ENCODE measurements at regions of chr10 and their contacts with region 1.

Region 1: GRCh38 chr10:59606551-59606961 is 103.1 kb downstream of the SLC16A9 start:
- DNase-seq: no peak
- CTCF ChIP-seq: no peak

Region 2: GRCh38 chr10:58781873-58782488 is 824.6 kb before region 1 on chr10:
- in situ Hi-C with region 1: loop called (anchors 25 kb)
- DNase-seq: peak; percentile 39
- CTCF ChIP-seq: peak; percentile 36

Region 3: DNA sequence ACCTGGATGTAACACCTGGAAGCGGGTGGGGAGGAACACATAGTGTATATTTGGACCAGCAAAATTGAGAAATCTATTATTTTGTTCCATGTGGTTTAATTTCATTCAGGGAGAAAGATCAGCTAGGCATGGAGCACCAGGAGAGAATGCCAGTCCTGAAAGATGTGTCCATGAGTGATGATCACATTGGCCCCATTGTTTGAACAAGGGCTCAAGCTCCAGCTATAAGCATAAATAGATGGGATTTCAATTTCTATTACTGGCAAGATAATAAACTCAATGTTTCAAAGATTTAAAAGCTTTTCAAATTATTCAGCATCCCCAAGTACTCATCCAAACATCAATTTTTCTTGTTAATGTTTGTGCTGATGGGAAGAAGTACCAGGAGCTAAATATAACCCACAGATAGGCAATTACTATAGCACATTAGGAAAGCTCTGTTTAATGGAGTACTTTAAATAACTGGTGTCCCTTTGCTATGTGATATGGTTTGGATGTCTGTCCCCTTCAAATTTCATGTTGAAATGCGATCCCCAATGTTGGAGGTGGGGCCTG is 705.4 kb before region 1 on chr10:
- in situ Hi-C with region 1: no loop called
- DNase-seq: no peak
- CTCF ChIP-seq: no peak

Region 4: DNA sequence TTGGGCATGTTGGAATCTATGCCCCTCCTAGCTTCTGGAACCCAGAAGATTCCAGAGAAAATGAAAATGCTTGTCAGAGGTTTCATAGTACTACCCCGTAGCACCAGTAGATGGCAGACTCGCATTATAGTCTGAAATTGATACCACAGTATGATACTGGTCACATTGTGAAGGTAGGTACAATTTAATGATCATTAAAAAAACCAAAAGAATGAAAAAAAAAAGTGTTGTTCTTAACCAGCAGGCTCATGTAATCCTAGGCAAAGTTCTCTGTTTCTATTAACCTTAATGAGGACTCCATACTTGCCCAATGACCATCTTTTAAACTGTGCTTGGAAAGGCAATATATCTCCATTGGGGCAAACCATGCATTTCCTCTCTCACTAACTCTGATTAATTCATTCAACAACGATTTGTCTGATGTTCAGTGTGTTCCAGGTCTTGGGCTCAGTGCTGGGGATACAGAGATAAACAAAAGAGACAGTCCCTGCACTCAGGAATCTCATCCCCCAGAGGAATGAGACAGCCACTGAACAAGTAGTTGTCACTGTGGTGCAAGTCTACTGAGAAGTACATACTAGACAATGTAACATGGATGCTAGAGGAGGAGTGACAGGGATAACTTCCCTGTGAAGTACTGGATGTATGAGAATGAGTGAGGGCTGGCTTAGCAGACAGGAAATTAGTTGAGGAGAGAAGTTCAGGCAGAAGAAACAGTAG is 653.6 kb before region 1 on chr10:
- in situ Hi-C with region 1: loop called (anchors 25 kb)
- DNase-seq: peak; percentile 23
- CTCF ChIP-seq: peak; percentile 55

Region 5: DNA sequence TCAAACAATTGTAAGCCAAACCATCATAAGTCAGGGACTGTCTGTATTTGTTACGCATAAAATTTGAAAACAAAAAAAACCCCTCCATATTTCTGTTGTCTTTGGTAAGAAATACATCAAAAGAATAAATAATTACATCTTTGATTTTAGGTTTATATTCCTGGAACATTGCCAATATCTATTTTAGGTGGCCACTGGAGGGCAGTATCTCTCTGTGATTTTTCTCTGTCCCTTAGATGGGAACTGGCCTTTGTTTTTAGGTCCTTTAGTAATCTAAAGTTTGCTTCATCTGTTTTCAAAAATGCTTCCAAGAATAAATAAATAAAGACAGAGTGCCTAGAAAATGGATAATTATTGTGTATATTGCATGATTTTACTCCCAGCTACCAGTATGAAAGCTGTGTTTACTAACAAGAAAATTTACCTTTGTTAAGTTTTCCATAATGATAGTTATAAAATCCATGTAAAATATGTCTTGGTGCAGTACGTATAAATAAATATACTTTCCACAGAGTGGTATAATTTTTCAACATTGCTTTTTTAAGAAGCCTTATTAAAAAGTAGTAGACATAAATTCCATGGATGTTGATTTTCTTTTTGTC is 365.9 kb before region 1 on chr10:
- in situ Hi-C with region 1: loop called (anchors 25 kb)
- DNase-seq: peak; percentile 12
- CTCF ChIP-seq: no peak

Region 6: GRCh38 chr10:60208676-60209269 is 602.2 kb after region 1 on chr10:
- in situ Hi-C with region 1: no loop called
- DNase-seq: no peak
- CTCF ChIP-seq: peak; percentile 51

Region 7: DNA sequence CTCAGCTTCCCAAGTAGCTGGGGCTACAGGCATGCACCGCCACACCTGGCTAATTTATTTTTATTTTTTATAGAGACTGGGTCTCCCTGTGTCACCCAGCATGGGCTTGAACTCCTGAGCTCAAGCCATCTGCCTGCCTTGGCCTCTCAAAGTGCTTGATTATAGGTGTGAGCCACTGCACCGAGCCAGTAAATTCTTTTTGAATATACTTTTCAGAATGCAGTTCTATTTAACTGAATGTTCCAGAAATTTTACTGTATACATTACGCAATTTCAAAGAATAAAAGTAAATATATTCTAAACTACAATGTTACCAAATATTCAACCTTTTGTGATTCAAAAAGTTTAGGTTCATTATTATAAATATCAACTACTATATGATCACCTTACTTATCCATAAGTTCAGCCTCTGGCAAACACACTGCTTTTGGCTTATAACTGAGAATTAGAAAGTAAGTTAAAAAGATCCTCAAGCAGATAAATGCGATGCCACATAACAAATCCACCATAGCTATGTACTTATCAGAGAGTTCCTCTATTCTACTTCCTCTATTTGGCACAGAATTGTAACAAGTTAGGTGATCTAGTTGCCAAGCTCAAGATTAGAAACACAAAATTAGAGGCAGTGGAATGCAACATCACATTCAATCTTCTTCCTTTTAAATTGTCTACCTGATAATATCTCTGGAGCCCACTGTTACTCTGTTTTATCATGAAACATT is 664.9 kb after region 1 on chr10:
- in situ Hi-C with region 1: no loop called
- DNase-seq: no peak
- CTCF ChIP-seq: no peak

Measured in GM13976 (cell line).